Activated CD4-positive, alpha-beta T cell treated with anti-CD3 and anti-CD28 coated beads for 36 hours (primary cell): ENCODE measurements at regions of chr1 and their contacts with region 1.

Region 1: DNA sequence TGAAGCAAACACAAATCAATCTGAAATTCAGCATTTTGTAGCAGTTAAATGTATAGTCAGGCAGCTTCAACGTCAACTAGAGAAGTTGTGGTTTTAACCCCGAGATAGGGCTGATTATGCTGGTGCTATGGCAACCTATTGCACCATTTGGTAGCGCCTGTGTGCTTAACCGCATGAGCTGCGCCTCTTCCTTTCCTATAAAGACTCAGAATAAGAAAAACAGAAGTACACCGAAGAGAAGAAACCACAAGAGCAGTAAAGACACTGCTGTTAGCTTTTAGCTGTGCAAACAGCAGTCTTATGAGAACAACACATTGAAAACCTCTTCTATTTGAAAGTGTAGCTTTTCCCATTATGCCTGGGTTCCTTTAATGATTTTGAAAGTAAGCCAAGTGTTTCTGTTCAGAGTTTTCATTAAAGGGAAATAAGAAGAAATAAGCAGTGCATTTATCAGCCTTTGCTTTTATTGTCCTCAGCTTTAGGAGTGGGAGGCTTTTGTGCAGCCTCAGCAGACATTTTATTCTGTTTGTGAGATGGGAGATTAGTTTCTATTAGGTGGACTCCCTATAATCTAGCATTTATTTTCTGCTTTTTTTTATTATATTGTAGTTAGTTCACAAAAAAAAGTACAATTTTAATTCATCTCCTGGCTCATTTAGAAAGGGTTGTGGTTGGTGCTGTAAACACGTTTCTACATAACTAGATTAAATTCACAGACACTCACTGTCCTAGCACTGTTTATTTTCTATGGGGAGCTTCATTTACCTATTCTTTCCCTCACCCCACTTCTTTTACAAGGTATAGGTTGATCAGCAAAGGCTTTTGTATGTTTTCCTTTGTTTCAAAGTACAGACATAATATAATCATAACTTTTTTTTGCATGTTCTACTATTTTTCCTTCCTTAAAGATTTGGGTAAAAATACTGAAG is 43.3 kb downstream of the PTPRC start:
- DNase-seq: peak; percentile 89
- ATAC-seq: peak; percentile 76
- H3K4me3 Mint-ChIP-seq: peak overlapping the region; percentile 61
- H3K27ac Mint-ChIP-seq: peak overlapping the region; percentile 96
- H3K4me1 Mint-ChIP-seq: peaks cover 85% of the 10 kb centered on the region
- H3K27me3 Mint-ChIP-seq: no peaks in the 10 kb centered on the region

Region 2: DNA sequence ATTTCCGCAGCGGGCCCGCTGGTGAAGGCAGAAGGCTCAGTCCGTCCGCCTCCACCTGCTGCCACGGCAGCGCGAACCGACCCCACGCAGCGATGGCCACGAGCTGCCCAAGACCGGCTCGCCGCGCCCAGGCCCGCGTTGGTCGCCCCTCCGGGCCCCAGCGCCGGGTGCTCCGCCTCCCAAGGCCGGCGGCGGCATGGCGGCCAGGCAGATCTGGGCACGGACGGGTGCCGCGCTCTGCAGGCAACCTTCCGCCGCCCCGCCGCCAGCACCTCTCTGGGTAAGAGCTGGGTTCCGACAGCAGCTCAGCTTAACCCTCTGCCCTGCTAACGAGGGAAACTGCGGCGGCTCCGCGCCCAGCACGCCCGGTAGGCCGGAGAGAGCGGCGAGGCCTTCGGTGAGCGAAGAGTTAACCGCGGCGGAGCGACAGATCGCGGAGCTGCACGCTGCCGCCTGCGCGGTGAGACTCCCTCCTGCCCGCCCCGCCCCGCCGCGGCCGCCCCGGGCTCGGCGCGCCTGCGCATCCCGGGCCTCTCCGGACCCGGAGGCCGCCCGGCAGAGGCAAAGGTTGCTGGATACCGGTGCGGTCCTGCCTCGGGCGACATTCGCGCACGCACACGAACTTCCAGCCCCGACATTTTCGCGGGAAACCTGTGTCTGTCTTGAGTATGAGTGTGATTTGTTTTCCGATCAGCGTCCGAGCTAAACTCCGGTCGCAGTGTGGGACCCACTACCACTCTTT is 779.5 kb before region 1 on chr1 and contains the start of gene C1orf53:
- CTCF ChIA-PET with region 1: no interaction called
- POLR2A ChIA-PET with region 1: no interaction called
- intact Hi-C with region 1: loop called in 1 of 2 experiments (anchors 10 kb)
- DNase-seq: peak; percentile 87
- ATAC-seq: peak; percentile 95
- H3K4me3 Mint-ChIP-seq: peak within 1 kb of the TSS; percentile 76
- H3K27ac Mint-ChIP-seq: peak within 1 kb of the TSS; percentile 88
- H3K4me1 Mint-ChIP-seq: peaks cover 14% of the 10 kb centered on the region
- H3K27me3 Mint-ChIP-seq: peaks cover 37% of the 10 kb centered on the region
- total RNA-seq, gene C1orf53: 0.66 TPM in 1 of 2 experiments, not detected in the other

Region 3: GRCh38 chr1:198253668-198254067 is 428.4 kb before region 1 on chr1:
- CTCF ChIA-PET with region 1: no interaction called
- POLR2A ChIA-PET with region 1: no interaction called
- intact Hi-C with region 1: loop called in 1 of 2 experiments (anchors 5 kb)
- DNase-seq: peak; percentile 22
- ATAC-seq: peak; percentile 88
- H3K4me3 Mint-ChIP-seq: peak overlapping the region; percentile 16
- H3K27ac Mint-ChIP-seq: peak overlapping the region; percentile 79
- H3K4me1 Mint-ChIP-seq: peaks cover 50% of the 10 kb centered on the region
- H3K27me3 Mint-ChIP-seq: peaks cover 2% of the 10 kb centered on the region

Region 4: GRCh38 chr1:198465201-198466144 is 216.6 kb before region 1 on chr1:
- CTCF ChIA-PET with region 1: interaction called, 4 read pairs
- POLR2A ChIA-PET with region 1: interaction called, 3 read pairs
- intact Hi-C with region 1: loop called (anchors 2 to 5 kb)
- DNase-seq: no peak
- ATAC-seq: peak; percentile 74
- H3K4me3 Mint-ChIP-seq: no peak overlapping the region
- H3K27ac Mint-ChIP-seq: peak overlapping the region; percentile 58
- H3K4me1 Mint-ChIP-seq: peaks cover 20% of the 10 kb centered on the region
- H3K27me3 Mint-ChIP-seq: no peaks in the 10 kb centered on the region

Region 5: DNA sequence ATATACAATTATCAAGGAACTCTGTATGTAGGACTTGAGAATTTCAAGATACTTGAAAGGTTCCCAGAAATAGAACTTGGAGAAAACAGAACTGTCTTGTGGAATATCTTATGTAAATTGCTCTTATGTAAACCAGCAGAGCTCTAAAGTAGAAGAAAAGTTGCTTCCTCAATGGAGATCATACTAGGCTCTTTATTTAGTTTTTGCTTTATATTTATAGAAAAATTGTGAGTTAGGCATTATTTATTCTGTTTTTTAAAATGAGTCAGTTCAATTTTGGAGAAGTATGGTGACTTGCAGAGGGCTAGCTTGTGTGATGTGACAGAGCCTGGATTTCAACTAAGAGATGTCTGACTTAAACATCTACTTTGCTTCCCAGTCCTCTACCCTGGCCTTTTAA is 182.0 kb before region 1 on chr1:
- CTCF ChIA-PET with region 1: no interaction called
- POLR2A ChIA-PET with region 1: no interaction called
- intact Hi-C with region 1: no loop called
- DNase-seq: no peak
- ATAC-seq: no peak
- H3K4me3 Mint-ChIP-seq: no peak overlapping the region
- H3K27ac Mint-ChIP-seq: no peak overlapping the region
- H3K4me1 Mint-ChIP-seq: peaks cover 13% of the 10 kb centered on the region
- H3K27me3 Mint-ChIP-seq: no peaks in the 10 kb centered on the region

Region 6: GRCh38 chr1:198638894-198639635 is 43.0 kb before region 1 on chr1 and contains the start of gene PTPRC:
- CTCF ChIA-PET with region 1: interaction called, 5 read pairs
- POLR2A ChIA-PET with region 1: interaction called, 16 read pairs
- intact Hi-C with region 1: loop called (anchors 1 kb)
- DNase-seq: no peak
- ATAC-seq: peak; percentile 62
- H3K4me3 Mint-ChIP-seq: peak within 1 kb of the TSS; percentile 87
- H3K27ac Mint-ChIP-seq: peak within 1 kb of the TSS; percentile 99
- H3K4me1 Mint-ChIP-seq: peaks cover 52% of the 10 kb centered on the region
- H3K27me3 Mint-ChIP-seq: no peaks in the 10 kb centered on the region
- total RNA-seq, gene PTPRC: 458 to 564 TPM

Region 7: GRCh38 chr1:198669023-198669698 is 12.9 kb before region 1 on chr1:
- CTCF ChIA-PET with region 1: interaction called, 58 read pairs
- POLR2A ChIA-PET with region 1: interaction called, 6 read pairs
- intact Hi-C with region 1: loop called (anchors 1 kb)
- DNase-seq: peak; percentile 57
- ATAC-seq: peak; percentile 85
- H3K4me3 Mint-ChIP-seq: peak overlapping the region; percentile 34
- H3K27ac Mint-ChIP-seq: peak overlapping the region; percentile 77
- H3K4me1 Mint-ChIP-seq: peaks cover 90% of the 10 kb centered on the region
- H3K27me3 Mint-ChIP-seq: no peaks in the 10 kb centered on the region

Region 8: DNA sequence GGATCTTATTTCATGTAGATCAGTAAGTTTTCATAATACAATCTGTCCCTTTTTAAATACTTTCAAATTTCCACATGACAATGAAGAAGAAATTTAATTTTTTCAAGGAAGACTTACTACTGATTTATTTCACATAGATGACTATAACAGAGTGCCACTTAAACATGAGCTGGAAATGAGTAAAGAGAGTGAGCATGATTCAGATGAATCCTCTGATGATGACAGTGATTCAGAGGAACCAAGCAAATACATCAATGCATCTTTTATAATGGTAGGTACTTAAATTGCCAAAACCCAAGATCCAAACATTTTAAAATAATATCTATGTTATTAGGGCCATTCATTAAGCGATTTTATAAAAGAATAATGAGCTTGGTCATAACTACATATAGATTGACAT is 67.2 kb after region 1 on chr1:
- CTCF ChIA-PET with region 1: no interaction called
- POLR2A ChIA-PET with region 1: no interaction called
- intact Hi-C with region 1: no loop called
- DNase-seq: no peak
- ATAC-seq: peak; percentile 83
- H3K4me3 Mint-ChIP-seq: no peak overlapping the region
- H3K27ac Mint-ChIP-seq: peak overlapping the region; percentile 40
- H3K4me1 Mint-ChIP-seq: peaks cover 15% of the 10 kb centered on the region
- H3K27me3 Mint-ChIP-seq: no peaks in the 10 kb centered on the region

Region 9: GRCh38 chr1:198809247-198809646 is 127.2 kb after region 1 on chr1:
- CTCF ChIA-PET with region 1: no interaction called
- POLR2A ChIA-PET with region 1: no interaction called
- intact Hi-C with region 1: no loop called
- DNase-seq: no peak
- ATAC-seq: no peak
- H3K4me3 Mint-ChIP-seq: no peak overlapping the region
- H3K27ac Mint-ChIP-seq: no peak overlapping the region
- H3K4me1 Mint-ChIP-seq: no peaks in the 10 kb centered on the region
- H3K27me3 Mint-ChIP-seq: no peaks in the 10 kb centered on the region